ENCODE measurements at regions of chr1 and their contacts with region 1.

Region 1: GRCh38 chr1:166432655-166433054 is 265.9 kb upstream of the FAM78B start:
- DNase-seq: no peak
- ATAC-seq: no peak

Region 2: DNA sequence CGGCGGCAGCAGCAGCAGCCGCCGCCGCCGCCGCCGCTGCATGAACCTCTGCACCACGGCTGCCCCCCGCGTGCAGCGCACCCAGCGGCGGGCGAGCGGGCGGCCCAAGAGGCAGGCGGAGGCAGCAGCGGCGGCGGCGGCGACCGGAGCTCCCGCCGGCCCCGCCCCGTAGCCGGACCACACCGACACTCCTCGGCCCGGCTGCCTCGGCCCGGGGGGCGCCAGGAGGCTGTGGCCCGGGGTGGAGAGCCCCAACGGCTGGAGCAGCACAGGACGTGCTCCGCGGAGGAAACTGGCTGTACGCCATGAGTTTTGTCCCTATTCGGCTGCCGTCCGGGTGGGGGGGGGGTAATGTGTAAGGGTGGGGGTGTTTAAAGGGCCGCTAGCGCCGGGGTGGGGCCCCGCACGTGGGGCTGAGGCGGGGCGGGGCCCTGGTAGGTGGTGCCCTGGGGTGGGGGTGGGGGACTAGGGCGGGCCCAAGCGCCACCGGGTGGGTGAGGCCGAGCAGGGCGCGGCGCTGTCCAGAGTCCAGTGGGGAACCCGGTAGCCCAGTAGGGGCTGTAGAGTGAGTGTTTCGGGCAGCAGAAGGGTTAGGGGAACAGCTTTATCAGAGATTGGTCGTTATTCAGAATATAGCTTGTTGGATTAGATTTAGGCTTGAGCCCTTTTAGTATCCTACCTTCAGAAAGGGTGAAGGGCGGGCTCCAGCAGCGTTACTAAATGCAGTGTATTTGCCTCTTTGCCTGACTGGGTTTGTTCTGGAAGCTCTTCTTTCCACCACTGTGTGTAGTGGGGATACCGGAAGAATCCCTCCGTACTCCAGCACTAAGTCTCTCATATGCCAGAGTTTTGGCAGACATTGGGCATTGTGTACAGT is 265.7 kb before region 1 on chr1 and contains the start of gene FAM78B:
- intact Hi-C with region 1: loop called (anchors 5 kb)
- DNase-seq: peak; percentile 88
- ATAC-seq: peak; percentile 96
- total RNA-seq, gene FAM78B: 3.4 TPM